MCF 10A (cell line): ENCODE measurements at regions of chr6 and their contacts with region 1.

Region 1: GRCh38 chr6:137076277-137077068 is 31.7 kb upstream of the IL20RA start:
- DNase-seq: peak; percentile 86
- H3K4me3 Mint-ChIP-seq: no peak overlapping the region
- H3K27ac Mint-ChIP-seq: no peak overlapping the region
- H3K4me1 Mint-ChIP-seq: no peaks in the 10 kb centered on the region
- H3K27me3 Mint-ChIP-seq: no peaks in the 10 kb centered on the region
- CTCF ChIP-seq: peak; percentile 68

Region 2: GRCh38 chr6:136846046-136846445 is 230.4 kb before region 1 on chr6:
- CTCF ChIA-PET with region 1: interaction called, 5 read pairs
- POLR2A ChIA-PET with region 1: no interaction called
- intact Hi-C with region 1: loop called (anchors 5 kb)
- DNase-seq: peak; percentile 63
- H3K4me3 Mint-ChIP-seq: no peak overlapping the region
- H3K27ac Mint-ChIP-seq: no peak overlapping the region
- H3K4me1 Mint-ChIP-seq: peaks cover 9% of the 10 kb centered on the region
- H3K27me3 Mint-ChIP-seq: no peaks in the 10 kb centered on the region
- CTCF ChIP-seq: peak; percentile 53

Region 3: GRCh38 chr6:137089305-137089704 is 12.8 kb after region 1 on chr6:
- CTCF ChIA-PET with region 1: interaction called, 24 read pairs
- POLR2A ChIA-PET with region 1: interaction called, 8 read pairs
- intact Hi-C with region 1: no loop called
- DNase-seq: no peak
- H3K4me3 Mint-ChIP-seq: no peak overlapping the region
- H3K27ac Mint-ChIP-seq: no peak overlapping the region
- H3K4me1 Mint-ChIP-seq: peaks cover 3% of the 10 kb centered on the region
- H3K27me3 Mint-ChIP-seq: no peaks in the 10 kb centered on the region
- CTCF ChIP-seq: no peak

Region 4: GRCh38 chr6:137240168-137240567 is 163.7 kb after region 1 on chr6:
- CTCF ChIA-PET with region 1: no interaction called
- POLR2A ChIA-PET with region 1: no interaction called
- intact Hi-C with region 1: no loop called
- DNase-seq: peak; percentile 98
- H3K4me3 Mint-ChIP-seq: no peak overlapping the region
- H3K27ac Mint-ChIP-seq: peak overlapping the region; percentile 92
- H3K4me1 Mint-ChIP-seq: peaks cover 59% of the 10 kb centered on the region
- H3K27me3 Mint-ChIP-seq: no peaks in the 10 kb centered on the region
- CTCF ChIP-seq: no peak